Cardiac septum (tissue), 1 donor: ENCODE measurements at regions of chr5 and their contacts with region 1.

Region 1: GRCh38 chr5:148452499-148453193 is 68.9 kb downstream of the FBXO38 start:
- DNase-seq: no peak

Region 2: DNA sequence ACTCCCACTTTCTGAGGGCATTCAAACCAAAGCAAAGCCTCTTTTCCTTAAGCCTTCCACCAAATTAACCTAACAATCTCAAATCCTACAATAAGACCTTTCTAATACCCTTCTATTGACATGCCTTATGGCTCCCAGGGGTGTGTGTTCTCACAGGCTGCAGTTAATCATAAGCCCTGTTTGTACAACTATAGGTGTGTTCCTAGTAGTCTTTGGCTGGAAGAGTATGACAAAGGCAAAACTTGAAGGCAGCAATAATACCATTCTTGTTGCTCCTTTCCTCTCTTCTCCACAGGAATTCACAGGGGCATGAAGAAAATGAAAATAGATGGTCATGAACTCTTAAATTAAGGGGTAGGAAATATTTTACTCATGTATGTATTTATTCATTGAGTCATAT is 79.8 kb before region 1 on chr5:
- intact Hi-C with region 1: no loop called
- DNase-seq: no peak

Region 3: DNA sequence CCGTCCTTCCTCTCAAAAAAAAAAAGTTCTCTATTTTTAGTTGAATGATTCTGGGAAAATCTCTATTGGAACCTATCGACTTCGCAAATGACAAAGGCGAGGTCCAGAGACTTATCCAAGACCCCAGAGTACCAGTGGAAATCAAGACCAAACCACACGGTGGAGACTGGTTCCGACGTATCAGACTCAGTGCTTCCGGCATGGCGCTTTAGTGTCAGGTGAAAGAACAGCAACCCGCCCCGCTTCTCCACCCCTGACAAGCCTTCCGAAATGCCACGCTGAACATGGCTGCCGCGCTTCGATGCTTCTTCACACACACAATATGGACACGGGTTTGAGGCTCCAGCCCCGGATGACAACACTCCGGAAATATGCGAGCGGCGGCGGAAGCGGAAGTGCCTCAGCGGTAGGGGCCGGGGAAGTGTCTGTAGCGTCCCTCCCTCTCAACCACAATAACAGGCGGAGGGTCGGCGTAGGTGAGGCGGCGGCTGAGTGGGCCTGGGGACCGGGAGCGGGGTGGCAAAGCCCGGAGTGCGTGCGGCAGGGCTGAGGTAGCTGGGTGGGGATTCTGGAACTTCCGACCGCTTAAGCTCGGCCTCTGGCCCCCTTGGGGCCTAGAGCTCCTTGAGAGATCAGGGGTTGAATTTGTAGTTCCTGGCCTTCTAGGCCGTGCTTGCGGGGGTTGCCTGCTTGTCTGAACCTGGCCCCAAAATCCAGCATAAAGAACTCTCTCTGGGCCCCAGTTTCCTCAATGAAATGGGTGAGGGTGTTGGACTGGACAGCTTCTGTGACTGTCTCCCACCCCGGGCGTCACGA is 68.9 kb before region 1 on chr5 and contains the start of gene FBXO38:
- intact Hi-C with region 1: loop called (anchors 5 kb)
- DNase-seq: peak; percentile 99
- total RNA-seq, gene FBXO38: 61.3 TPM